ENCODE measurements at regions of chr15 and their contacts with region 1.

Region 1: GRCh38 chr15:67433495-67434099 is 87.3 kb upstream of the C15orf61 start:
- DNase-seq: peak in 1 of 2 donors; percentile 18
- ATAC-seq: peak in 1 of 2 donors; percentile 36
- H3K4me3 ChIP-seq: no peak overlapping the region
- H3K27ac ChIP-seq: no peak overlapping the region
- H3K4me1 ChIP-seq: no peaks in the 10 kb centered on the region
- H3K27me3 ChIP-seq: no peaks in the 10 kb centered on the region
- CTCF ChIP-seq: peak in 4 of 5 experiments; percentile 47 to 62 (median 57)
- POLR2A ChIP-seq: no peak

Region 2: DNA sequence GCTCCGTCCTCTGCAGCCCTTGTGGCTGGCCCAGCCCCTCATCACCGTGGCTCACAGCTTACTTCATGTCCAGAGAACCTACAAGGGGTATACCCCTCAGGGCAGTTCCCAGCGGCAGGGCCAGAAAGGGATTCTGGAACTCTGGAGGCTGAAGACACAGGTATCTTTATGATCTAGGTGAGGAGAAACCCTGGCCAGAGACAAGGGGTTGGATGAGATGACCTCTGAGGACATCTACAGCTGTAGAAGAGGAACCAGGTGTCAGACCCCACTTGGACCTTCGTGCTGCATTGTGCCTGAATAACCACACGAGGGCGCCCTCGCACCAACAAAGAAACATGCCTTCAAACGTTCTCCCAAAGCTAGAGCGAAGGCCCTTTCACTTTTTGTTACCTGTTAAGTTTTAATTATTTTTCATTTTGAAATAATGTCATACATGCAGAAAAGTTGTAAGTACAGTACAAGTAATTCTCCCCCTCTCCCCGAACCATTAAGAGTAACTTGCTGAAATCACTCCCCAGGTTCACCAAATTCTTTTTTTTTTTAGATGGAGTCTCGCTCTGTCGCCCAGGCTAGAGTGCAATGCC is 486.9 kb before region 1 on chr15:
- in situ Hi-C with region 1: loop called in 3 of 4 experiments (anchors 5 to 25 kb)
- intact Hi-C with region 1: loop called (anchors 2 kb)
- DNase-seq: peak; percentile 39 to 62
- ATAC-seq: peak; percentile 75 to 78
- H3K4me3 ChIP-seq: no peak overlapping the region
- H3K27ac ChIP-seq: no peak overlapping the region
- H3K4me1 ChIP-seq: no peaks in the 10 kb centered on the region
- H3K27me3 ChIP-seq: no peaks in the 10 kb centered on the region
- CTCF ChIP-seq: peak; percentile 88 to 95 (median 93)
- POLR2A ChIP-seq: no peak

Region 3: GRCh38 chr15:66955871-66956585 is 477.6 kb before region 1 on chr15:
- in situ Hi-C with region 1: loop called in 1 of 4 experiments (anchors 10 kb)
- intact Hi-C with region 1: no loop called
- DNase-seq: no peak
- ATAC-seq: no peak
- H3K4me3 ChIP-seq: no peak overlapping the region
- H3K27ac ChIP-seq: no peak overlapping the region
- H3K4me1 ChIP-seq: no peaks in the 10 kb centered on the region
- H3K27me3 ChIP-seq: no peaks in the 10 kb centered on the region
- CTCF ChIP-seq: no peak
- POLR2A ChIP-seq: no peak

Measured in gastrocnemius medialis (tissue), 4 donors.